GM12878 (cell line): ENCODE measurements at regions of chr9 and their contacts with region 1.

Region 1: DNA sequence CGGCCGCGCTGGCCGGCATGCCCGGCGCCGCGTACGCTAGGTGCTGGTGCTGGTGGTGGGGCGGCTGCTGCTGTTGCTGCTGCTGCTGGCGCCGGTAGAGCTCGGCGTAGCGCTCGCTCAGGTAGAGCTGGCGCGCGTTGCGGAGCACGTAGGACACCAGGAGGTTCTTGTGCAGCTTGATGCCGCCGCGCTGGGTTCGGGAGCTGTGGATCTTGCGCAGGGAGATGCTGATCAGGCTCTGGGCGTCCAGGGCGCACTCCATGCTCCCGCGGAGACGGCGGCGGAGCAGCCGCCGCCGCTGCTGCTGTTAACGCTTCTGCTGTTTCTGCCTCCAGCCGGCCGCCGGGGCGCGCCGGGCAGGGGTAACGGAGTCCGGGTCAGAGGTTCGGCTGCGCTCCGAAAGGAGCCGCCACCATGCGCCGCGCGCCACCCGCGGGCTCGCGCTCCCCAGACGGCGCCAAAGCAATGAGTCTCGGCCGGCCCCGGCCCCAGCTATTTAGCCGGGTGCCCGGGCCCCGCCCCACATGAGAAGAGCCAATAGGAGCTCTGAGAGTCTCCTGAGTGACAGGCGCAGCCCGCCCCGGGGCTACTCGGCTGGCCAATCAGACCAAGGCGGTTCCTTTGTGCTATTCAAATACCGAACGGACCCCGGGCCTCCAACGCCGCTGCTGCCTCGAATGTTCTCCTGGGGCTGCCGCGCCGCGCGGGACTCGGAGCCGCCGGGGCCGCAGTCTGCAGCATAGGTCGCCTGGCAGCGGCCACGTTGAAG is at the start of gene IER5L:
- DNase-seq: no peak
- ATAC-seq: peak; percentile 91
- H3K4me3 ChIP-seq: peak within 1 kb of the TSS; percentile 81
- H3K27ac ChIP-seq: no peak within 1 kb of the TSS
- H3K4me1 ChIP-seq: peaks cover 21% of the 10 kb centered on the region
- H3K27me3 ChIP-seq: peaks cover 0 to 3% of the 10 kb centered on the region in 2 experiments; a peak in 2 of 4 replicates
- CTCF ChIP-seq: no peak
- EP300 ChIP-seq: no peak
- POLR2A ChIP-seq: peak; percentile 96
- RAD21 ChIP-seq: no peak
- polyA plus RNA-seq, gene IER5L: 0.08 to 0.13 TPM

Region 2: GRCh38 chr9:128992995-128993394 is 185.0 kb before region 1 on chr9:
- CTCF ChIA-PET with region 1: no interaction called
- POLR2A ChIA-PET with region 1: no interaction called
- RAD21 ChIA-PET with region 1: no interaction called
- SMC1A ChIA-PET with region 1: no interaction called
- in situ Hi-C with region 1: no loop called
- intact Hi-C with region 1: no loop called
- DNase-seq: no peak
- ATAC-seq: peak; percentile 56
- H3K4me3 ChIP-seq: no peak overlapping the region
- H3K27ac ChIP-seq: no peak overlapping the region
- H3K4me1 ChIP-seq: no peaks in the 10 kb centered on the region
- H3K27me3 ChIP-seq: no peaks in the 10 kb centered on the region
- CTCF ChIP-seq: peak; percentile 12 to 38 (median 35); a peak in 3 of 6 replicates
- EP300 ChIP-seq: no peak
- POLR2A ChIP-seq: no peak
- RAD21 ChIP-seq: no peak

Region 3: GRCh38 chr9:129148463-129149204 is 29.3 kb before region 1 on chr9:
- CTCF ChIA-PET with region 1: interaction called, 273 read pairs
- POLR2A ChIA-PET with region 1: interaction called, 3 read pairs
- RAD21 ChIA-PET with region 1: interaction called, 197 read pairs
- SMC1A ChIA-PET with region 1: interaction called, 116 read pairs
- in situ Hi-C with region 1: no loop called
- intact Hi-C with region 1: no loop called
- DNase-seq: no peak
- ATAC-seq: peak; percentile 81
- H3K4me3 ChIP-seq: no peak overlapping the region
- H3K27ac ChIP-seq: peak overlapping the region; percentile 17
- H3K4me1 ChIP-seq: peaks cover 15% of the 10 kb centered on the region
- H3K27me3 ChIP-seq: no peaks in the 10 kb centered on the region
- CTCF ChIP-seq: no peak
- EP300 ChIP-seq: peak; percentile 28; a peak in 2 of 4 replicates
- POLR2A ChIP-seq: no peak; the same call in 1 of the 2 replicates
- RAD21 ChIP-seq: no peak

Region 4: DNA sequence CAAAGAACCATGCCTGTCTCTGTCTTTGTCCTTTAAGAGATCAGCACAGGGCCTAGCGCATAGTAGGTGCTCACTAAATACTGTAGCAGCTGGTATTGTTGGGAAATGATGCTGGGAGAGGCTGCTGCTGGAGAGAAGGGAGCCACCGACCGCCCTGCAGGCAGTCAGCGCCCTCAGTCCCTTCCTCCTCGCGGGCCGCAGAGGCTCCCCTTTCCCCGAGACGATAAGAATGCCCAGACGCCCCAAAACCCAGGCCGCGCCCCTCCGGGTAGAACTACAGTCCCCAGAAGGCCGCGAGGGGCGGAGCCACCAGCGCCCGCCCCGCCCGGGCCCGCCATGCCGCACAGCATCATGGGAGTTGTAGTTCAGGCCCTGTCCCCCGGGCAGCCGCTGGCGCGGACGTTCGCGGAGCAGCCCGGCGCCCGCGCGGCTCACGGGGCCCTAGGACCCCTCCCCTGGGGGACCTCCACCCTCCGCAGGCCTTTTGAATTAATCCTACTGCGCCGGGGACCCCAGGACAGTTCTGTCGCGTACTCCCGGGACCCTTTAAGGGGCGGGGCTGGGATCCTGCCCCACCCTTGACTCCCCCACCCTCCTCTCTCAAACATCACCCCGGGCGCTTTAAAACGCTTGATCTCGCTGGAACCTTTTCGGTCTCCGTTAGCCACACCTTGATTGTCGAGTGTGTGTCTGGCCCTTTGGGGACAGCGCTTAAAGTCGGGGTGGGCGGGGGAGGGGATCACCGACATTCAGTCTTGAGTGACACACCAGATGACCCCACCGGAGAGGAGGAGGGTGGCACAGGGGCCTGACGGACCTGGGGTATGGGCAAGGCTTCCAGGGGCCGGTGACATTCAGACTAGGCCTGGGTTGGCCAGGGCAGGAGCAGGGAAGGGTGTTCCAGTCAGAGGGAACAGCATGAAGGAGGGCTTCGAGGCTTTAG is 24.9 kb after region 1 on chr9:
- CTCF ChIA-PET with region 1: no interaction called
- POLR2A ChIA-PET with region 1: interaction called, 11 read pairs
- RAD21 ChIA-PET with region 1: no interaction called
- SMC1A ChIA-PET with region 1: no interaction called
- in situ Hi-C with region 1: no loop called
- intact Hi-C with region 1: no loop called
- DNase-seq: no peak
- ATAC-seq: peak; percentile 99
- H3K4me3 ChIP-seq: peak overlapping the region; percentile 60
- H3K27ac ChIP-seq: no peak overlapping the region
- H3K4me1 ChIP-seq: no peaks in the 10 kb centered on the region
- H3K27me3 ChIP-seq: no peaks in the 10 kb centered on the region
- CTCF ChIP-seq: no peak
- EP300 ChIP-seq: no peak
- POLR2A ChIP-seq: 0 out of 2 replicates have a peak, but pooled peaks have one; percentile 34
- RAD21 ChIP-seq: no peak

Region 5: DNA sequence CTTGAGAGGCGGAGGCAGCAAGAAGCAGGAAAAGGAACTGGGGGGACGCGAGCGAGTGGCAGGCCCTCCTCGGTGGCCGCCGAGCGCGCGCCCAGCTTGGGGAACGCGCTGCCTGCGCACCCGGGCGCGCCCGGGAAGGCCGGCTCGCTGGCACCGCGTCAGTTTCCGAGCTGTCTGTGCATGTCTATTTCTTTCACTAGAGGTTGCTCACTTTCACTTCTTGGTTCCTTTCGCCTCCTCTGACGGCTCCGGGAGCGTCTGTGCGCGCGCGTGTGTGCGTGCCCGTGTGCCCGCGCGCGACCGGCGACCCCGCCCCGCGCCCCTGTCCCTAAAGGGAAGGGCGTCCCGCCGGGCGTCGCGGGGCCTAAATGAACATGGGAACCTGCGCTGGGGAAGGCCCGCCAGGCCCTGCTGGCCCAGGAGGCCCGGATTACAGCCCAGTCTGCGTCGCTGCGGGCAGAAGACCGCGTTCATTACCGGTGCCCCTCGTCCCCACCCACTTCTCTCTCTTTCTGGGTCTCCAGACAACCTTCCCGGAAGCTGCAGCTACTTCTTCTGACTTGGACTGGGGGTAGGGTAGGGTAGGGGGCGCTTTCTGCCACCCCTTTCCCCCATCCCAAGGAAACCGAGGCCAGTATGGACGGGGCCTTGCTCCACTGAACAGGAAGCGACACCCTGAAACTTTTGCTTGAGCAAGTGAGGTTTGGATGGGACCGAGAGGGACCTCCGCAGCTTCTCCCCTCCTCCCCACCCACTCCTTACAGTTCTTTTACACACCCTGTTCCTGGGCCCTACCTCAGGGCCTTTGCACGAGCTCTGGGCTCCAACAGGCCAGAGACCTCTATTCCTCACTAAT is 205.8 kb after region 1 on chr9:
- CTCF ChIA-PET with region 1: interaction called, 10 read pairs
- POLR2A ChIA-PET with region 1: no interaction called
- RAD21 ChIA-PET with region 1: interaction called, 5 read pairs
- SMC1A ChIA-PET with region 1: interaction called, 6 read pairs
- in situ Hi-C with region 1: no loop called
- intact Hi-C with region 1: no loop called
- DNase-seq: peak; percentile 38
- ATAC-seq: peak; percentile 96
- H3K4me3 ChIP-seq: peak overlapping the region; percentile 66
- H3K27ac ChIP-seq: peak overlapping the region; percentile 50
- H3K4me1 ChIP-seq: peaks cover 24% of the 10 kb centered on the region
- H3K27me3 ChIP-seq: no peaks in the 10 kb centered on the region; a peak in 2 of 4 replicates
- CTCF ChIP-seq: peak in 1 of 3 experiments; percentile 44; a peak in 2 of 6 replicates
- EP300 ChIP-seq: no peak
- POLR2A ChIP-seq: peak; percentile 62
- RAD21 ChIP-seq: peak; percentile 24; the same call in 1 of the 2 replicates

Region 6: GRCh38 chr9:129597355-129598088 is 419.5 kb after region 1 on chr9:
- CTCF ChIA-PET with region 1: interaction called, 34 read pairs
- POLR2A ChIA-PET with region 1: interaction called, 6 read pairs
- RAD21 ChIA-PET with region 1: interaction called, 15 read pairs
- SMC1A ChIA-PET with region 1: no interaction called
- in situ Hi-C with region 1: no loop called
- intact Hi-C with region 1: no loop called
- DNase-seq: no peak
- ATAC-seq: peak; percentile 80
- H3K4me3 ChIP-seq: peak overlapping the region; percentile 44; the same call in 1 of the 2 replicates
- H3K27ac ChIP-seq: peak overlapping the region; percentile 27; the same call in 1 of the 2 replicates
- H3K4me1 ChIP-seq: peaks cover 24% of the 10 kb centered on the region
- H3K27me3 ChIP-seq: no peaks in the 10 kb centered on the region
- CTCF ChIP-seq: no peak; a peak in 1 of 6 replicates
- EP300 ChIP-seq: no peak
- POLR2A ChIP-seq: no peak
- RAD21 ChIP-seq: no peak

Region 7: GRCh38 chr9:129610473-129611301 is 432.7 kb after region 1 on chr9:
- CTCF ChIA-PET with region 1: interaction called, 34 read pairs
- POLR2A ChIA-PET with region 1: interaction called, 3 read pairs
- RAD21 ChIA-PET with region 1: interaction called, 22 read pairs
- SMC1A ChIA-PET with region 1: interaction called, 6 read pairs
- in situ Hi-C with region 1: loop called (anchors 5 kb)
- intact Hi-C with region 1: loop called (anchors 10 kb)
- DNase-seq: no peak
- ATAC-seq: peak; percentile 77
- H3K4me3 ChIP-seq: peak overlapping the region; percentile 81; the same call in 1 of the 2 replicates
- H3K27ac ChIP-seq: no peak overlapping the region
- H3K4me1 ChIP-seq: peaks cover 8% of the 10 kb centered on the region
- H3K27me3 ChIP-seq: no peaks in the 10 kb centered on the region
- CTCF ChIP-seq: peak; percentile 80 to 91 (median 90)
- EP300 ChIP-seq: no peak
- POLR2A ChIP-seq: no peak
- RAD21 ChIP-seq: peak; percentile 89